Activated CD4-positive, alpha-beta T cell treated with anti-CD3 and anti-CD28 coated beads for 36 hours (primary cell): ENCODE measurements at regions of chr7 and their contacts with region 1.

Region 1: GRCh38 chr7:155961241-155962190 is 149.3 kb upstream of the SHH start:
- DNase-seq: peak; percentile 68
- ATAC-seq: peak; percentile 27
- H3K4me3 Mint-ChIP-seq: no peak overlapping the region
- H3K27ac Mint-ChIP-seq: peak overlapping the region; percentile 14
- H3K4me1 Mint-ChIP-seq: peaks cover 28% of the 10 kb centered on the region
- H3K27me3 Mint-ChIP-seq: peaks cover 18% of the 10 kb centered on the region

Region 2: GRCh38 chr7:155580367-155580766 is 381.1 kb before region 1 on chr7:
- CTCF ChIA-PET with region 1: no interaction called
- POLR2A ChIA-PET with region 1: no interaction called
- intact Hi-C with region 1: loop called in 1 of 2 experiments (anchors 1 kb)
- DNase-seq: peak; percentile 70
- ATAC-seq: peak; percentile 96
- H3K4me3 Mint-ChIP-seq: no peak overlapping the region
- H3K27ac Mint-ChIP-seq: no peak overlapping the region
- H3K4me1 Mint-ChIP-seq: peaks cover 13% of the 10 kb centered on the region
- H3K27me3 Mint-ChIP-seq: peaks cover 8% of the 10 kb centered on the region

Region 3: GRCh38 chr7:155916926-155917655 is 44.4 kb before region 1 on chr7:
- CTCF ChIA-PET with region 1: no interaction called
- POLR2A ChIA-PET with region 1: no interaction called
- intact Hi-C with region 1: no loop called
- DNase-seq: no peak
- ATAC-seq: no peak
- H3K4me3 Mint-ChIP-seq: no peak overlapping the region
- H3K27ac Mint-ChIP-seq: no peak overlapping the region
- H3K4me1 Mint-ChIP-seq: no peaks in the 10 kb centered on the region
- H3K27me3 Mint-ChIP-seq: peaks cover 4% of the 10 kb centered on the region

Region 4: DNA sequence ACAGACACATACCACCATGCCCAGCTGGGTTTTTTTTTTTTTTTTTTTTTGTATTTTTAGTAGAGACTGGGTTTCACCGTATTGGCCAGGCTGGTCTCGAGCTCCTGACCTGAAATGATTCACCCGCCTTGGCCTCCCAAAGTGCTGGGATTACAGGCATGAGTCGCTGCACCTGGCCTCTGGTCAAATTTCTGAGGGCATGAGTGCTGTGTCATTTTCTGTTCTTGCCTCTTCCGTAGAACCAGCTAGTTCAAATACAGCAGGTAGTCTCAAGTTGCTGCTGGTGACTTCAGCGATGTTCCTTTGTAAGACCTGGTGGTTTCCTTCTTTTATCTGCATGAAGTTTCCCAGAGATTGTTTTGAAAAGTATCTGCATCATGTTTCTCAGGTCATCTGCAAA is 14.5 kb before region 1 on chr7:
- CTCF ChIA-PET with region 1: no interaction called
- POLR2A ChIA-PET with region 1: no interaction called
- intact Hi-C with region 1: loop called in 1 of 2 experiments (anchors 2 kb)
- DNase-seq: no peak
- ATAC-seq: no peak
- H3K4me3 Mint-ChIP-seq: no peak overlapping the region
- H3K27ac Mint-ChIP-seq: no peak overlapping the region
- H3K4me1 Mint-ChIP-seq: peaks cover 14% of the 10 kb centered on the region
- H3K27me3 Mint-ChIP-seq: peaks cover 2% of the 10 kb centered on the region

Region 5: GRCh38 chr7:155995183-155995612 is 33.7 kb after region 1 on chr7:
- CTCF ChIA-PET with region 1: interaction called, 3 read pairs
- POLR2A ChIA-PET with region 1: interaction called, 3 read pairs
- intact Hi-C with region 1: loop called (anchors 1 to 5 kb)
- DNase-seq: no peak
- ATAC-seq: no peak
- H3K4me3 Mint-ChIP-seq: no peak overlapping the region
- H3K27ac Mint-ChIP-seq: no peak overlapping the region
- H3K4me1 Mint-ChIP-seq: peaks cover 60% of the 10 kb centered on the region
- H3K27me3 Mint-ChIP-seq: peaks cover 32% of the 10 kb centered on the region

Region 6: DNA sequence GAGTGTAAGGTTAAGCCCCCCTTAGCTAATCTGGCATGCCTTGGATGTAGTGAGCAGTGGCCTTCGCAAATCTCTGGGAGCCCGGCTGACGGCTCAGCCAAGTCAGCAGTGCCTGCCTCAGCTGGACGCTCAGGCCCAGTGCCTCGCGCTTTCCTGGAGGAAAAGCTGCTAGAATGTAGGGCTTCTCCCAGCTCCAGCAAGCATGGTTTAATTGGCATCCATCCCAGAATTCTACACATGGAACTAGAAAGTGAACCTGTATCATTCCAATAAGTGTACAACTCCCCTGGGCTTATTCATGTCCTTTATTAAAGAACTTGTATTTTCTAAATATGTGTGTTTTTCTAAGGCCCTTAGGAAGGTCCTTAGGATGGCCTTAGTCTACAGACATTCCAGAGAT is 138.6 kb after region 1 on chr7:
- CTCF ChIA-PET with region 1: no interaction called
- POLR2A ChIA-PET with region 1: no interaction called
- intact Hi-C with region 1: no loop called
- DNase-seq: no peak
- ATAC-seq: no peak
- H3K4me3 Mint-ChIP-seq: no peak overlapping the region
- H3K27ac Mint-ChIP-seq: no peak overlapping the region
- H3K4me1 Mint-ChIP-seq: peaks cover 20% of the 10 kb centered on the region
- H3K27me3 Mint-ChIP-seq: no peaks in the 10 kb centered on the region